GM12878 (cell line): ENCODE measurements at regions of chr16 and their contacts with region 1.

Region 1: DNA sequence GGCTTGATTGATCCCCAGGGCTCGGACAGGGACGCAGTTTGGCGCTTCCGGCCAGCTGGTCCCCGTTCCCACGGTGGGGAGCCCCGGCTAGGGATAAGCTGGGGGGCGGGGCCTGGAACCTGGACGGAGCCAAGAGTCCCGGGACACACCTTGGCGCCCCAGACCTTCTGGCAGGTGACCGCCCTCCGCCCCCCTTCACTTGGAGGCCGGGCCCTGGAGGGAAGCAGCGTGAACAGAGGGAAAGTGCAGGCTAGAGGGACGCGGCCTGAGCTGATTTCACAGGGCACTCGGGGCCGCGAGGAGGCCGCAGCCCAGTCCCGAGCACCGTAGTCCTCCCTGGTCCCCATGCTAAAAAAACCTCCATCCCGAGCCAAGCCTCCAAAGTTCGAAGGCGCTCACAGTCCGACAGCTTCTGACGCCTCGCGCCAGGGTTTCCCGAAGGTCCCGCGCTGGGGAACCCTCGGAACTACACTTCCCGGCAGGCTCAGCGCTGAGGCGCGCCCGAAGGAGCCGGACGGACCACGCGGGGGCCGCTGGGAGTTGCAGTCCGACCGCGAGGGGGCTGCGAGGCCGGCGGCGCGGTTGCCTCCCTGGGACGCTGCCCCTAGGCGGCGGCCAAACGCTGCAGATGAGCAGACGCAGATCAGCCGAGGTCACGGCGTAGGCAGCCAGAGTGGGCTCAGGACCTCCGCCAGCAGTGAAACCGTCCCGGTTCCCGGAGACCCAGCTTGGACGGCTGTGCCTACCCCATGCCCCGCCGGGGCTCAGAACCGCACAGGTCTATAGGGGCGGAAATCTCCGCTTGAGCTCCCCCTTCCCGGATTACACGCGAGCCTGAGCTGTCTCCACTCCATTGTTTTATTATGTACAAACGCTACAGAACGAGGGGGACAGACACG is at the start of gene TBX6:
- DNase-seq: peak; percentile 64
- ATAC-seq: peak; percentile 88
- H3K4me3 ChIP-seq: peak within 1 kb of the TSS; percentile 72
- H3K27ac ChIP-seq: peak within 1 kb of the TSS; percentile 88
- H3K4me1 ChIP-seq: peaks cover 26% of the 10 kb centered on the region
- H3K27me3 ChIP-seq: no peaks in the 10 kb centered on the region
- CTCF ChIP-seq: peak; percentile 82 to 95 (median 83)
- EP300 ChIP-seq: no peak
- POLR2A ChIP-seq: peak; percentile 84
- RAD21 ChIP-seq: peak; percentile 58
- polyA plus RNA-seq, gene TBX6: not detected

Region 2: GRCh38 chr16:29653471-29653870 is 438.3 kb before region 1 on chr16:
- CTCF ChIA-PET with region 1: no interaction called
- POLR2A ChIA-PET with region 1: no interaction called
- RAD21 ChIA-PET with region 1: no interaction called
- SMC1A ChIA-PET with region 1: no interaction called
- in situ Hi-C with region 1: no loop called
- intact Hi-C with region 1: no loop called
- DNase-seq: no peak
- ATAC-seq: peak; percentile 93
- H3K4me3 ChIP-seq: no peak overlapping the region
- H3K27ac ChIP-seq: peak overlapping the region; percentile 61
- H3K4me1 ChIP-seq: peaks cover 18% of the 10 kb centered on the region
- H3K27me3 ChIP-seq: no peaks in the 10 kb centered on the region
- CTCF ChIP-seq: no peak
- EP300 ChIP-seq: peak in 1 of 2 experiments; percentile 37; a peak in 2 of 4 replicates
- POLR2A ChIP-seq: no peak
- RAD21 ChIP-seq: no peak

Region 3: DNA sequence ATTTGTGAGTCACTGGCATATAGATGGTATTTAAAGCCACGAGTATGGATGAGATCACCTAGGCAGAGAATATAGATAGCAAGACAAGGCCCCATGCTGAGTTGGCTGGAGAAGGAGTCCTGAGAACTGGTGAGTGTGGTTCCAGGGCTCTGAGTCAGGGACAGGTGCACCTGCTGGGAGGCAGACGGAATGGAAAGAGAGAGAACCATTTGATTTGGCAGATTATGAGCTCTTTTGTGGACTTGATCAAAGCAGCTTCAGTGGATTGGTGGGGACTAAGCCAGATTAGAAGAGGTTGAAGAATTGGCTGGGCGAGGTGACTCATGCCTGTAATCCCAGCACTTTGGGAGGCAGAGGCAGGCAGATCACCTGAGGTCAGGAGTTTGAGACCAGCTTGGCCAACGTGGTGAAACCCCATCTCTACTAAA is 73.0 kb before region 1 on chr16:
- CTCF ChIA-PET with region 1: no interaction called
- POLR2A ChIA-PET with region 1: no interaction called
- RAD21 ChIA-PET with region 1: no interaction called
- SMC1A ChIA-PET with region 1: no interaction called
- in situ Hi-C with region 1: no loop called
- intact Hi-C with region 1: no loop called
- DNase-seq: no peak
- ATAC-seq: no peak
- H3K4me3 ChIP-seq: no peak overlapping the region
- H3K27ac ChIP-seq: no peak overlapping the region
- H3K4me1 ChIP-seq: 0 out of 2 replicates have a peak, but pooled peaks cover 2% of the 10 kb centered on the region
- H3K27me3 ChIP-seq: peaks cover 0 to 2% of the 10 kb centered on the region in 2 experiments; a peak in 1 of 4 replicates
- CTCF ChIP-seq: no peak
- EP300 ChIP-seq: no peak
- POLR2A ChIP-seq: no peak
- RAD21 ChIP-seq: no peak

Region 4: DNA sequence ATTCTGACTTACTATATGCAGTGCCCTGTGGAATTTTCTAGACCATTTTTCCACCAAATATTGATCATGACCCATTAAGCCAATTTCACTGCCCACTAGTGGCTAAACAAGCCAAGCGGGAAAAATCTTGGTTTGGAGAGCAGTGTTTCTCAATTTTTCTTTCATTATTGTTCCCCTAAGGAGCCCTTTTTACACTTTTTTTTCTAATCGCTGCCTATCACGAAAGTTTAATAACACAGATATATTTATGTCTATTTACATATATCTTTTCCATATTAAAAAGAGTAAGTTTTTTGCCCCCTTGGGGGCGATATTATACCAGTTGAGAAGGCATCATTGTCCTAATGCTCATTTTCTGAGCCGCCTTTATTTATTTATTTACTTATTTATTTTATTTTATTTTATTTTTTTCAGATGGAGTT is 49.9 kb before region 1 on chr16:
- CTCF ChIA-PET with region 1: interaction called, 10 read pairs
- POLR2A ChIA-PET with region 1: interaction called, 3 read pairs
- RAD21 ChIA-PET with region 1: no interaction called
- SMC1A ChIA-PET with region 1: interaction called, 4 read pairs
- in situ Hi-C with region 1: no loop called
- intact Hi-C with region 1: no loop called
- DNase-seq: no peak
- ATAC-seq: no peak
- H3K4me3 ChIP-seq: no peak overlapping the region
- H3K27ac ChIP-seq: no peak overlapping the region
- H3K4me1 ChIP-seq: no peaks in the 10 kb centered on the region
- H3K27me3 ChIP-seq: no peaks in the 10 kb centered on the region
- CTCF ChIP-seq: peak; percentile 6 to 29 (median 24); a peak in 3 of 6 replicates
- EP300 ChIP-seq: no peak
- POLR2A ChIP-seq: no peak
- RAD21 ChIP-seq: peak; percentile 47

Region 5: GRCh38 chr16:30065143-30065850 is 26.4 kb before region 1 on chr16 and contains the start of gene ALDOA:
- CTCF ChIA-PET with region 1: interaction called, 77 read pairs
- POLR2A ChIA-PET with region 1: interaction called, 21 read pairs
- RAD21 ChIA-PET with region 1: interaction called, 42 read pairs
- SMC1A ChIA-PET with region 1: interaction called, 9 read pairs
- in situ Hi-C with region 1: no loop called
- intact Hi-C with region 1: no loop called
- DNase-seq: peak; percentile 86
- ATAC-seq: peak; percentile 89
- H3K4me3 ChIP-seq: peak within 1 kb of the TSS; percentile 94
- H3K27ac ChIP-seq: peak within 1 kb of the TSS; percentile 94
- H3K4me1 ChIP-seq: peaks cover 30% of the 10 kb centered on the region
- H3K27me3 ChIP-seq: no peaks in the 10 kb centered on the region
- CTCF ChIP-seq: no peak
- EP300 ChIP-seq: peak in 1 of 2 experiments; percentile 51; a peak in 2 of 4 replicates
- POLR2A ChIP-seq: peak; percentile 86
- RAD21 ChIP-seq: no peak
- polyA plus RNA-seq, gene ALDOA: 218 to 335 TPM

Region 6: DNA sequence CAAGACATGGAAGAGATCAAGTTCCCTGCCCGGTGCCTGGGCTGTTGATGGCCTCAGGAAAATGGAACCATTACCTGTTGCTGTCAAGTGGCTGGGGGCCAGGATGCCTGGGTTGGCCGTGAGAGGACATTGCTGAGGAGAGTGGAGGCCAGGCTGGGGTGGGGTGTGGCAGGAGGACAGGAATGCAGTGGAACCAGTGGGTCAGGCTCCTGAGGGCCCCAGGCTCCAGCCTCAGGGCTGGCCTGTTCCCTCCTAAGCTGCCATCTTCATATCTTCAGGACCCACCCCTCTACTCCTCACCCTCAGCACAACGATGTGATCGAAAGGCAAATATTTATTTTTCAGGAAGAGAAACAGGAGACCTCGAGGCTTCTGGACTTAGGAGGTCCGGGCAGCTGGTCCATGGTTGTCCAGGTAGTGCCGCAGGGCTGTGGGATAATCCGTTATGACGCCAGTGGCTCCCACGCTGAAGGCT is 12.8 kb after region 1 on chr16:
- CTCF ChIA-PET with region 1: interaction called, 22 read pairs
- POLR2A ChIA-PET with region 1: interaction called, 3 read pairs
- RAD21 ChIA-PET with region 1: no interaction called
- SMC1A ChIA-PET with region 1: interaction called, 11 read pairs
- in situ Hi-C with region 1: no loop called
- intact Hi-C with region 1: no loop called
- DNase-seq: no peak
- ATAC-seq: no peak
- H3K4me3 ChIP-seq: no peak overlapping the region
- H3K27ac ChIP-seq: no peak overlapping the region
- H3K4me1 ChIP-seq: no peaks in the 10 kb centered on the region
- H3K27me3 ChIP-seq: no peaks in the 10 kb centered on the region
- CTCF ChIP-seq: no peak
- EP300 ChIP-seq: no peak
- POLR2A ChIP-seq: no peak
- RAD21 ChIP-seq: no peak

Region 7: GRCh38 chr16:30142672-30143346 is 51.1 kb after region 1 on chr16:
- CTCF ChIA-PET with region 1: interaction called, 25 read pairs
- POLR2A ChIA-PET with region 1: interaction called, 4 read pairs
- RAD21 ChIA-PET with region 1: interaction called, 4 read pairs
- SMC1A ChIA-PET with region 1: no interaction called
- in situ Hi-C with region 1: no loop called
- intact Hi-C with region 1: no loop called
- DNase-seq: peak; percentile 30
- ATAC-seq: peak; percentile 91
- H3K4me3 ChIP-seq: no peak overlapping the region
- H3K27ac ChIP-seq: no peak overlapping the region
- H3K4me1 ChIP-seq: peaks cover 6% of the 10 kb centered on the region; the same call in 1 of the 2 replicates
- H3K27me3 ChIP-seq: no peaks in the 10 kb centered on the region
- CTCF ChIP-seq: peak; percentile 38 to 59 (median 48); a peak in 4 of 6 replicates
- EP300 ChIP-seq: no peak
- POLR2A ChIP-seq: no peak
- RAD21 ChIP-seq: peak; percentile 84

Region 8: GRCh38 chr16:30355144-30355894 is 263.6 kb after region 1 on chr16 and contains the start of gene CD2BP2:
- CTCF ChIA-PET with region 1: interaction called, 4 read pairs
- POLR2A ChIA-PET with region 1: no interaction called
- RAD21 ChIA-PET with region 1: interaction called, 3 read pairs
- SMC1A ChIA-PET with region 1: interaction called, 4 read pairs
- in situ Hi-C with region 1: no loop called
- intact Hi-C with region 1: loop called (anchors 10 kb)
- DNase-seq: peak; percentile 93
- ATAC-seq: peak; percentile 81
- H3K4me3 ChIP-seq: peak within 1 kb of the TSS; percentile 94
- H3K27ac ChIP-seq: peak within 1 kb of the TSS; percentile 93
- H3K4me1 ChIP-seq: peaks cover 27% of the 10 kb centered on the region
- H3K27me3 ChIP-seq: no peaks in the 10 kb centered on the region
- CTCF ChIP-seq: no peak
- EP300 ChIP-seq: peak in 1 of 2 experiments; percentile 47; a peak in 1 of 4 replicates
- POLR2A ChIP-seq: peak; percentile 68
- RAD21 ChIP-seq: no peak
- polyA plus RNA-seq, gene CD2BP2: 3.3 to 5.5 TPM

Region 9: DNA sequence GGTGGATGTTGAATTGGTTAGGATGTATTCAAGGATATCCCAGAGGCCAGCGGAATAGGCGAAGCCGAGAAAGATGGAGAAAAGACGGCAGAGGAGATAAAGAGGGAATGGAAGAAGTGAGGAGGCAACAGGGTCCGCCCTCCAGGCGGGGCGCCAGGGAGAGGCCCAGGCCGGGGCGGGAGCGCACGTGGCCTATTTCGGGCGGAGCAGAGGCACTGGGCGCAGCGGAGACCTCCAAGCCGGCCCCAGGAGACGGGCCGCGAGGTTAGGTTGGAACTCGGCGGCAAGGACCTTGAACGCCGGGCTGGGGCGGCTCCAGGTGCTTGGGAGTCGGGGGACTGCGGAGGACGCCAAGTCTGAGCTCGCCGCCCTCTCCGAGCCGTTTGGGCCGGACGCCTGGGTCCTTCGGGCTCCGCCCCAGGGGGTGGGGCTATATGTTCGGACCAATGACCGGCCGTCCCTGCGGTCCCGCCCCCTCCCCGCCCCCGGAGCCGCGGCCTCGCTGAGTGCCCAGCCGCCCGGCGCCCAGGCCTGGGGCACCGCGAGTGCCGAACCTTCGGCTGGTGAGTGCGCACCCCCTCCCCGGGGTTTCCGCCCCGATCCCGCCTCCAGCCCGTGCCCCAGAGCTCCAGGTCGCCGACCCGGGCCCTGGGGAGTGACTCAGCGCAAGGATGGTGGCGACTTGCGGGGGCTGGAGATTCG is 315.5 kb after region 1 on chr16 and contains the start of gene ZNF771:
- CTCF ChIA-PET with region 1: interaction called, 21 read pairs
- POLR2A ChIA-PET with region 1: interaction called, 6 read pairs
- RAD21 ChIA-PET with region 1: interaction called, 12 read pairs
- SMC1A ChIA-PET with region 1: interaction called, 18 read pairs
- in situ Hi-C with region 1: loop called (anchors 5 kb)
- intact Hi-C with region 1: loop called (anchors 5 kb)
- DNase-seq: no peak
- ATAC-seq: peak; percentile 93
- H3K4me3 ChIP-seq: peak within 1 kb of the TSS; percentile 83
- H3K27ac ChIP-seq: no peak within 1 kb of the TSS
- H3K4me1 ChIP-seq: peaks cover 14% of the 10 kb centered on the region
- H3K27me3 ChIP-seq: no peaks in the 10 kb centered on the region; a peak in 1 of 4 replicates
- CTCF ChIP-seq: peak in 1 of 3 experiments; percentile 21; a peak in 1 of 6 replicates
- EP300 ChIP-seq: no peak
- POLR2A ChIP-seq: peak; percentile 82
- RAD21 ChIP-seq: no peak
- polyA plus RNA-seq, gene ZNF771: 0.98 to 2.0 TPM